Sigmoid colon (tissue), 7 donors: ENCODE measurements at regions of chr15 and their contacts with region 1.

Region 1: DNA sequence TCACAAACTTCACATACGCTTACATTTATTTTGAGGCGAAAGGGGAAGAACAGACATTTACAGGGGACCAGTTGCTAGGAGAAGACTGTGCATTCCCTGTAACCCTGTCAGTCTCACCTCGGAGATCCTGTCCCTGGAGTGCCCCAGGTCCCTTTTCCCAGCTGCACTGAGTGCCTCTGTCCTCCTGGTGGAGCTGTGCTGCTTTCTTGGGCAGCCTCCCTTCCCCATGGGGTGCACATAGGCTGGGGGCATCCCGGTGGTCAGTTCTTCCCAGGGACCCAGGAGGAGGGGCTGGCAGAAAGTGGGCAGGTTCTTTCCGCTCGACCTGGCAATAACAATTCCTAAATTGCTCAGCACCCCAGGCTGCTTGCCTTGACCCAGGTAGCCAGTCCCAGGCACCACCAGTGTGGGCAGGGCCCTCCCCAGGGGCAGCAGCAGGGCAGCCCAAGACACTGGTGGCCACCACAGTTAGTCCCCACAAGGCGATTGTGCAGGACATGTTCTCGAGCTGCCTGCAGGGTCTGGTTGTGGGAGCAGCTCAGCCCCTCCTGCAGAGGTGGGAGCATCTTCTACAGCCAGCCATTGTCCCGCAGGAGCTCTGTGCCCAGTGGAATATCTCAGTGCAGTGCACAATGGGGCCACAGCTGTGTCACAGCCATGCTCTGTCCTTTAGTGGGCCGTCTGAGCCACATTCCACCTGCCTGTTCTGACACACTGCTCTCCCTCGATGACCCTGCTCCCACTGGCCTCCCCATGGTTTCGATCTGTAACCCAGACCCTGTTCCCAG is 36.3 kb downstream of the APBA2 start:
- DNase-seq: peak; percentile 55
- H3K4me3 ChIP-seq: no peak overlapping the region
- H3K27ac ChIP-seq: no peak overlapping the region
- H3K4me1 ChIP-seq: no peaks in the 10 kb centered on the region
- H3K27me3 ChIP-seq: peaks cover 0 to 9% (median 0%) of the 10 kb centered on the region in 3 donors
- CTCF ChIP-seq: no peak
- EP300 ChIP-seq: no peak
- POLR2A ChIP-seq: no peak

Region 2: GRCh38 chr15:28043691-28044091 is 878.4 kb before region 1 on chr15:
- intact Hi-C with region 1: no loop called
- DNase-seq: no peak
- H3K4me3 ChIP-seq: no peak overlapping the region
- H3K27ac ChIP-seq: no peak overlapping the region
- H3K4me1 ChIP-seq: no peaks in the 10 kb centered on the region
- H3K27me3 ChIP-seq: no peaks in the 10 kb centered on the region
- CTCF ChIP-seq: no peak
- EP300 ChIP-seq: no peak
- POLR2A ChIP-seq: no peak

Region 3: DNA sequence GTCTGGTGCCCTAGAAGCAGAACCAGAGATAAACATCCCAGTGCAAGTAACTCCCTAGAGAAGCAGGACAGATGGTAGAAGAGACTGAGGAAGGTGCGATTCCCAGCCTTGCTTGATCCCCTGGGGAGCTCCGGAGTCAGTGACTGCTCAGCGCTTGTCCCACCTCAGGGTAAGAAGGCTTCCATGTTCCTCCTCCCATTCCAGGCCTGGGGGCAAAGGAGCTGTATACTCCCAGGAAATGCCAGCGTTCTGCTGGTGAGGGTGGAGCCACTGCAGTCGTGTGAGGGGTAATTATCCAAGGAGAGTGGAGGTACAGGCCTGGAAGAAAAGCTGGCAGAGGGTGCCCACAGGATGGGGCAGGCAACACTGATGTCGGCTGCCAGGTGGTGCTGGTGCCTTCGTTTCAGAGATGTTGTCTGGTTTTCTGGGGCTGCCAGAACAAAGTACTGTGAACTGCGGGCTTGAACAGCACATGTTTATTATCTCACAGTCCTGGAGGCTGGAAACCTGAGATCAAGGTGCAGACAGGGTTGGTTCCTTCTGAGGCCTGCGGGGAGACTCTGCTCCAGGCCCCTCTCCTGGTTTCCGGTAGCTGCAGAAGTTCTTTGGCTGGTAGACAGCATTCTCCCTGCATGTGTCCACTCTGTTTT is 48.4 kb before region 1 on chr15:
- intact Hi-C with region 1: loop called (anchors 5 kb)
- DNase-seq: no peak
- H3K4me3 ChIP-seq: no peak overlapping the region
- H3K27ac ChIP-seq: no peak overlapping the region
- H3K4me1 ChIP-seq: no peaks in the 10 kb centered on the region
- H3K27me3 ChIP-seq: no peaks in the 10 kb centered on the region
- CTCF ChIP-seq: no peak
- EP300 ChIP-seq: no peak
- POLR2A ChIP-seq: no peak

Region 4: GRCh38 chr15:28969511-28970085 is 47.5 kb after region 1 on chr15:
- intact Hi-C with region 1: loop called (anchors 5 kb)
- DNase-seq: no peak
- H3K4me3 ChIP-seq: no peak overlapping the region
- H3K27ac ChIP-seq: no peak overlapping the region
- H3K4me1 ChIP-seq: no peaks in the 10 kb centered on the region
- H3K27me3 ChIP-seq: peaks cover 0 to 11% (median 0%) of the 10 kb centered on the region in 3 donors
- CTCF ChIP-seq: no peak
- EP300 ChIP-seq: no peak
- POLR2A ChIP-seq: no peak

Region 5: GRCh38 chr15:29124581-29125381 is 202.7 kb after region 1 on chr15:
- intact Hi-C with region 1: no loop called
- DNase-seq: peak; percentile 62
- H3K4me3 ChIP-seq: no peak overlapping the region
- H3K27ac ChIP-seq: no peak overlapping the region
- H3K4me1 ChIP-seq: no peaks in the 10 kb centered on the region
- H3K27me3 ChIP-seq: no peaks in the 10 kb centered on the region
- CTCF ChIP-seq: no peak
- EP300 ChIP-seq: no peak
- POLR2A ChIP-seq: no peak